Activated CD4-positive, alpha-beta memory T cell treated with anti-CD3 and anti-CD28 coated beads for 36 hours (primary cell): ENCODE measurements at regions of chr1 and their contacts with region 1.

Region 1: GRCh38 chr1:42576935-42577334 is 81.3 kb upstream of the PPIH start:
- DNase-seq: no peak
- H3K4me3 Mint-ChIP-seq: no peak overlapping the region
- H3K27ac Mint-ChIP-seq: no peak overlapping the region
- H3K4me1 Mint-ChIP-seq: no peaks in the 10 kb centered on the region
- H3K27me3 Mint-ChIP-seq: no peaks in the 10 kb centered on the region

Region 2: DNA sequence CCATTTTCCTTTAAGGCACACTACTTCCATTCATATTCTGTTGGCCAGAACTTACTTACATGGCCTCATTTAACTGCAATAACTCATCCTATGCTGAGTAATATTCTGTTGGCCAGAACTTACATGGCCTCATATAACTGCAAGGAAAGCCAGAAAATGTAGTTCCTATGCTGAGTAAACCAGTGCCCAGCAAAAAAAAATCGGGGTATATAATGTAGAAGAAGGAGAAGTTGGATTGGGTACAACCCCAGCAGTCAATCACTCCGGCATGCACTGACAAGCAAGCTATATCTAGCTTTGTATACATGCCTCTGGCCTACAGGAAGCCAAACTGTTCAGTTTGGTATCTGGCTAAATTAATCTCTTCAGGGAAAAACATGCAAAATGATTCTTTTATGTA is 41.9 kb after region 1 on chr1:
- CTCF ChIA-PET with region 1: no interaction called
- POLR2A ChIA-PET with region 1: no interaction called
- intact Hi-C with region 1: no loop called
- DNase-seq: no peak
- H3K4me3 Mint-ChIP-seq: no peak overlapping the region
- H3K27ac Mint-ChIP-seq: no peak overlapping the region
- H3K4me1 Mint-ChIP-seq: no peaks in the 10 kb centered on the region
- H3K27me3 Mint-ChIP-seq: no peaks in the 10 kb centered on the region

Region 3: GRCh38 chr1:42730988-42731387 is 154.1 kb after region 1 on chr1:
- CTCF ChIA-PET with region 1: interaction called, 9 read pairs
- POLR2A ChIA-PET with region 1: no interaction called
- intact Hi-C with region 1: loop called (anchors 1 kb)
- DNase-seq: peak; percentile 81
- H3K4me3 Mint-ChIP-seq: no peak overlapping the region
- H3K27ac Mint-ChIP-seq: no peak overlapping the region
- H3K4me1 Mint-ChIP-seq: peaks cover 2% of the 10 kb centered on the region
- H3K27me3 Mint-ChIP-seq: no peaks in the 10 kb centered on the region

Region 4: GRCh38 chr1:42747125-42747524 is 170.2 kb after region 1 on chr1:
- CTCF ChIA-PET with region 1: interaction called, 30 read pairs
- POLR2A ChIA-PET with region 1: no interaction called
- intact Hi-C with region 1: loop called (anchors 5 kb)
- DNase-seq: peak; percentile 47
- H3K4me3 Mint-ChIP-seq: no peak overlapping the region
- H3K27ac Mint-ChIP-seq: no peak overlapping the region
- H3K4me1 Mint-ChIP-seq: no peaks in the 10 kb centered on the region
- H3K27me3 Mint-ChIP-seq: no peaks in the 10 kb centered on the region

Region 5: DNA sequence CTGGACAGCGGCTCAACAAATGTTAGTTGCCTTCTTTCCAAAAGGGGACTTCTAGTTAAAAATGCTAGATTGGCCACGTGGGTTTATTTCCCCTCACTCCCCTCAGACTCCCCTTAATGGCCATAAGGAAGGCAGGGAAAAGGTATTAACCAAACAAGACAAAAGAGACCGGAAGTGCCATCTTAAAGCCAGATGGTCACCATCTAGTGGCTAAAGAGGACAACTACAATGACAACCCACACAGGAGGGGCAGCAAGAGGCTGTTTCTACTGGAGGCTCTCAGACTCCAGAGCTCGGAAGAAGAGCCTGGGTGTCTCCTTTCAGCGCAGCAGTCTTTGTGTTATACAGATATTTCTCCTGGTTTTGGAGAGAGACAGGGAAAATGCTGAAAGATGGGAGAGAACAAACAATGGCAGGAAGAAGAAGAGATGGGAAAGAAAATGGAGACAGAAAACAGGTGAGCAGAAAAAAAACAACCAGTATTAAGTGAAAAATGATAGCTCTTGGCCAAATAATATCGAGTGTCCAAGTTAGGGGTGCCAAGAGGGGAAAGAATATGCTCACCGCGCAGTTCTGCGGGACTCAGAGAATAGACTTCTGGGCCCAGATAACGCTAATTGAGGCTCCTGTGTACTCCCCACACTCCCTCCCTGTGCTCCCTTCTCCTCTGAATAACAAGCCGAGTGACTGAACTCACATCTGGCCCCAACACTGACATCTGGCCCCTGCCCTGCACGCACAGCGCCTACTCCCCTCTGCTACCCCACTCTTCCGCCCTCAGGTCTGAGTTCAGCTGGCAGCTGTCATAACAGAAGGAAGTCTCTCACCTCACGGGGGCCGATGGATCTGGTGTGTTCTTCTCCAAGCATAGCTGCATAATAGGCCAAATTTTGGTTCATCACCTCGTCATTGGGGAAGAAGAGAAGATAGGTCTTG is 180.3 kb after region 1 on chr1:
- CTCF ChIA-PET with region 1: interaction called, 11 read pairs
- POLR2A ChIA-PET with region 1: no interaction called
- intact Hi-C with region 1: no loop called
- DNase-seq: no peak
- H3K4me3 Mint-ChIP-seq: no peak overlapping the region
- H3K27ac Mint-ChIP-seq: no peak overlapping the region
- H3K4me1 Mint-ChIP-seq: no peaks in the 10 kb centered on the region
- H3K27me3 Mint-ChIP-seq: no peaks in the 10 kb centered on the region